ENCODE measurements at regions of chr4 and their contacts with region 1.

Region 1: GRCh38 chr4:122700178-122700725 is 32.3 kb upstream of the BBS12 start:
- DNase-seq: no peak
- H3K4me3 Mint-ChIP-seq: peak overlapping the region; percentile 76
- H3K27ac Mint-ChIP-seq: peak overlapping the region; percentile 94
- H3K4me1 Mint-ChIP-seq: peaks cover 55% of the 10 kb centered on the region
- H3K27me3 Mint-ChIP-seq: no peaks in the 10 kb centered on the region

Region 2: DNA sequence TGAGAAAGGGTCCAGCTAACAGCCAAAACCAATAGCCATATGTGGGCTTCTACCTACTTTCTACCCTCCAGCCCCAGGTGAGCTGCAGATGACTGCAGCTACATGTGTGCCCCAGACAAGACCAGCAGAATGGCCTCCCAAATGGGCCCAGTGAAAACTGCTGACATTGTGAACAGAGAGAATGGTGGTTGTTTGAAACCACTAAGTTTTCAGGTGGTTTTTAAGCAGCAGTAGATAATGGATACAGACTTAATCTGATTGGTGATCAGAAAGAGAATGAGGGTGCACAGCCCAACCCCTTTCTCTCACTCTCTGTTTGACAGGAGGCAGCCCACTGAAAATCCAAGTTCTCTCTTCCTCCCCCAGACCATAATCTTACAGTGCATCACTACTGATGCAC is 10.3 kb before region 1 on chr4:
- intact Hi-C with region 1: loop called (anchors 1 kb)
- DNase-seq: peak; percentile 80
- H3K4me3 Mint-ChIP-seq: peak overlapping the region; percentile 13
- H3K27ac Mint-ChIP-seq: peak overlapping the region; percentile 95
- H3K4me1 Mint-ChIP-seq: peaks cover 52% of the 10 kb centered on the region
- H3K27me3 Mint-ChIP-seq: no peaks in the 10 kb centered on the region